Ovary (tissue), 10 donors: ENCODE measurements at regions of chr17 and their contacts with region 1.

Region 1: GRCh38 chr17:66165513-66166123 is 26.3 kb downstream of the CEP112 start:
- DNase-seq: no peak
- H3K4me3 ChIP-seq: no peak overlapping the region
- H3K27ac ChIP-seq: no peak overlapping the region
- H3K4me1 ChIP-seq: no peaks in the 10 kb centered on the region
- H3K27me3 ChIP-seq: no peaks in the 10 kb centered on the region
- CTCF ChIP-seq: peak; percentile 49 to 70 (median 66)
- EP300 ChIP-seq: no peak
- POLR2A ChIP-seq: no peak

Region 2: GRCh38 chr17:65220732-65221131 is 944.9 kb before region 1 on chr17:
- intact Hi-C with region 1: loop called in 1 of 4 experiments (anchors 5 kb)
- DNase-seq: no peak
- H3K4me3 ChIP-seq: no peak overlapping the region
- H3K27ac ChIP-seq: no peak overlapping the region
- H3K4me1 ChIP-seq: no peaks in the 10 kb centered on the region
- H3K27me3 ChIP-seq: no peaks in the 10 kb centered on the region
- CTCF ChIP-seq: no peak
- EP300 ChIP-seq: no peak
- POLR2A ChIP-seq: no peak

Region 3: GRCh38 chr17:65287040-65287439 is 878.6 kb before region 1 on chr17:
- intact Hi-C with region 1: loop called in 2 of 4 experiments (anchors 5 kb)
- DNase-seq: no peak
- H3K4me3 ChIP-seq: no peak overlapping the region
- H3K27ac ChIP-seq: no peak overlapping the region
- H3K4me1 ChIP-seq: no peaks in the 10 kb centered on the region
- H3K27me3 ChIP-seq: no peaks in the 10 kb centered on the region
- CTCF ChIP-seq: no peak
- EP300 ChIP-seq: no peak
- POLR2A ChIP-seq: no peak

Region 4: DNA sequence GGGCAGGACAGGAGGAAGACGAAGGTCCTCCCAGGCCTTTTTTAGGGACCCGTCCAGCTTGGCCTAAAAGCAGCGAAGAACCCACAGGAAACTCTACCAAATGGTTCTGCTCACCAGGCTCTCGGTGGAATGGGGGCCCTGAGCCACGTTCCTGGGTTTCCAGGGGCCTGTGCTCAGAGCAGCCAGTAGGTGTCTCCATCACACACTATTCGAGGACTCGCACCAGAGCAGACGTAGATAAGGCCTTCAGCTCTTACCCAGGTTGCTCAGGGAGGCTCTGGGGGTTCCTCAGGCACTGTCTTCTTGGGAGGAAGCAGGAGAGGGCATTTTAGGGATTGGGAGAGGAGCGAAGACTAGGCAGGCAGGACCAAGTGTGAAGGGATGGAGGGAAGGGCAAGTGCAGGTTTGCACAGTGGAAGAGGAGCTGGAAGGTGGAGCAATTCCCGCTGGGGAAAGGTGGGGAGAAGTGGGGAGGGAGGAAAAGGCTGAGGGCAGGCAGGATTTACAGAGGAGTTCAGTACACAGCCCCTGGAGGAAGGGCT is 871.4 kb before region 1 on chr17:
- intact Hi-C with region 1: loop called in 2 of 4 experiments (anchors 5 kb)
- DNase-seq: peak; percentile 62 to 75 (median 66)
- H3K4me3 ChIP-seq: no peak overlapping the region
- H3K27ac ChIP-seq: no peak overlapping the region
- H3K4me1 ChIP-seq: peaks cover 1% of the 10 kb centered on the region
- H3K27me3 ChIP-seq: no peaks in the 10 kb centered on the region
- CTCF ChIP-seq: peak; percentile 52 to 67 (median 59)
- EP300 ChIP-seq: no peak
- POLR2A ChIP-seq: no peak

Region 5: GRCh38 chr17:65556014-65556909 is 609.4 kb before region 1 on chr17:
- intact Hi-C with region 1: loop called in 2 of 4 experiments (anchors 10 kb)
- DNase-seq: peak; percentile 77 to 87 (median 85)
- H3K4me3 ChIP-seq: peak overlapping the region; percentile 86
- H3K27ac ChIP-seq: no peak overlapping the region
- H3K4me1 ChIP-seq: peaks cover 28% of the 10 kb centered on the region
- H3K27me3 ChIP-seq: no peaks in the 10 kb centered on the region
- CTCF ChIP-seq: peak; percentile 48 to 63 (median 59)
- EP300 ChIP-seq: no peak
- POLR2A ChIP-seq: no peak